Endothelial cell of umbilical vein (primary cell): ENCODE measurements at regions of chr12 and their contacts with region 1.

Region 1: GRCh38 chr12:100229058-100229637 is 28.5 kb downstream of the ACTR6 start:
- DNase-seq: no peak
- H3K4me3 ChIP-seq: no peak overlapping the region
- H3K27ac ChIP-seq: no peak overlapping the region
- H3K4me1 ChIP-seq: no peaks in the 10 kb centered on the region
- H3K27me3 ChIP-seq: no peaks in the 10 kb centered on the region
- CTCF ChIP-seq: no peak
- POLR2A ChIP-seq: no peak

Region 2: DNA sequence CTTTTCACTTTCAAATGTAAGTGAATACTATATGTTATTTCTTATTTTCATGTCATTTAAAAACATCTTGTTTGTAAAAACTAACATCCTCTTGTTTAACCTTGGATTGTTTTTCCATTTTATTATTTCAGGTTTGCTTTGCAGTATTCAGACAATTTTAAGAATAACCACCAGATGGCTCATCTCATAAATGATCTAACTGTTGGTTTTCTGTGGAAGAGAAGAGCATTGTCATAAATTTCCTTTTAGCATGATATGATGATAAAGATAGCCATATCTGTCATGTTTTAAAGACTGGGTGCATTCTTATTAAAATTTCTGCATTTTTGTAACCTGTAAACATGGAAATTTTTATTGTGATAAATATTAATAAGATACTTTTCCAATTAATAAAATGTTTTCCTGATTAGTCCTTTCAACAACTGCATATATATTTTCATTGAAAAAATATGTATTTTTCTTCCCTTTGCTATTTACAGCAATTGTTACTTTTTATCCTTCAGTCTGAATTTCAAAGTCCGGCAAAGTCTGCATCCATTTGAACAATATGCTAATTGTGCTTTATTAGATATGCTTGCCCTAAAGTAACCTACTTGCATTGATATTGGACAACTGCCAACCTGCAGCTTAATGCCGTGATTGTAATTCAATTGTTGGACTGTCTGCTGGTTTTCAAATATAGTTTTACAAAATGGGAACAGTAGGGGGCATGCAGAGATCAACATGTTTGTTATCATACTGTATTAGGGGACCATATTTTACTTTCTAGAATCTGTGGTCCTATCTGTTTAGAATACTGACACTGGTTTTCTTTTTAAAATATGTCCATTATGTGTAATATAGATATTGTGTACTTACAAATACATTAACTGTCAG is 418.2 kb before region 1 on chr12:
- CTCF ChIA-PET with region 1: no interaction called
- POLR2A ChIA-PET with region 1: no interaction called
- dilution Hi-C with region 1: no loop called
- intact Hi-C with region 1: loop called (anchors 2 kb)
- DNase-seq: peak; percentile 57
- H3K4me3 ChIP-seq: no peak overlapping the region
- H3K27ac ChIP-seq: no peak overlapping the region
- H3K4me1 ChIP-seq: no peaks in the 10 kb centered on the region
- H3K27me3 ChIP-seq: peaks cover 0 to 2% of the 10 kb centered on the region in 2 experiments
- CTCF ChIP-seq: no peak
- POLR2A ChIP-seq: no peak

Region 3: GRCh38 chr12:100414739-100415138 is 185.6 kb after region 1 on chr12:
- CTCF ChIA-PET with region 1: no interaction called
- POLR2A ChIA-PET with region 1: no interaction called
- dilution Hi-C with region 1: no loop called
- intact Hi-C with region 1: no loop called
- DNase-seq: no peak
- H3K4me3 ChIP-seq: no peak overlapping the region
- H3K27ac ChIP-seq: no peak overlapping the region
- H3K4me1 ChIP-seq: no peaks in the 10 kb centered on the region
- H3K27me3 ChIP-seq: no peaks in the 10 kb centered on the region
- CTCF ChIP-seq: no peak
- POLR2A ChIP-seq: no peak

Region 4: GRCh38 chr12:100699209-100699608 is 470.1 kb after region 1 on chr12:
- CTCF ChIA-PET with region 1: no interaction called
- POLR2A ChIA-PET with region 1: no interaction called
- dilution Hi-C with region 1: no loop called
- intact Hi-C with region 1: no loop called
- DNase-seq: no peak
- H3K4me3 ChIP-seq: no peak overlapping the region
- H3K27ac ChIP-seq: no peak overlapping the region
- H3K4me1 ChIP-seq: no peaks in the 10 kb centered on the region
- H3K27me3 ChIP-seq: no peaks in the 10 kb centered on the region
- CTCF ChIP-seq: no peak
- POLR2A ChIP-seq: no peak